ENCODE measurements at regions of chr4 and their contacts with region 1.

Region 1: DNA sequence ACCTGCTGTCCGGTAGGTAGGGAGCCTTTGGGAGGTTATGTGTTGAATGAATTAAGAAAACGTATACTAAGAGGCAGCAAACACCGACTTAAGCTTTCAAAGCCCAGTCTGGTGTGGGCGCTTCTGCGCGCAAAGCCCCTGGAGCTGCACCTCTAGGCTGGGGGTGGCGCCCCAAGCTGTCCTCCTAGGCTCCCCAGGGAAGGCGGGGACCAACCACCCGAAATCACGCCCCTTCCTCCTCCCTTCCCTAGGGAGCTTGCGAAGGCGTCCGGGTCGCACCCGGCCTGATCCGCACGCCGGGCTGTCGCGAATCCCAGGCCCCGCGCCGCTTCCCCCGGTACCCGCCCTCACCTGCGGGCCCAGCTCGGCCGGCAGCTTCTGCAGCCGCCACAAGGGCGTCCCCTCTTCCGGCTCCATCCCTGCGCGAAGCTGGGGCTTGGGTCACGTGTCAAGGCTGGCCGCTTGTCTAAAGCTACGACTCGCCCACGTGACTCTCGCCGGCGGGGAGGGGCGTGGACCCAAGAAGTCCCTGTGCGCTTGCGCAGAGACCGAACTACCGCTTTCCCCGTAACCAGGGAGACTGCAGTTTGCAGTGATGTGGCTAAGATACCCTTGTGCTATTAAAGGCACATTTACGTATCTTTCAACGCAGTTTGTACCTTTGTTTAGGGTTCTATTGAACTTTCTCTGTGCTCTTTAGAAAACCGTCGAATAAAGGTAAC is at the start of gene COMMD8:
- DNase-seq: peak; percentile 99
- total RNA-seq, gene COMMD8: 21.1 TPM

Region 2: DNA sequence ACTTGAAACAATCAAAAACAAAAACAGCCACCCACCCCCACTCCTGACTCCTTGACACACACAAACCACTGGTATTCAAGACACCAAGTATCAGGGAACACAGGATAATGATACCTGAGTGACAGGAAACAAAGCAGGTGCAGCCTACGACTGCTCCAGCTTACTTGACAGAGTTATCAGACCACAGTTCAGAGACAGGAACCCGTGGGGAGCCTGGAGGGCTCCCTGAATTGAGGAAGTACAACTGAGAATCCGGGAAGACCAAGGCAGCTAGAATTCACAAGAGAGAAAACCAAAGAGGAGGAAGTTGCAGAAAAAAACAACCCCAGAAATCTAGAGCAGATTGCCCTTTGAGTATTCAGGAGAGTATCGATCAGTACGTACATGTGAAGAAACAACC is 20.4 kb before region 1 on chr4:
- intact Hi-C with region 1: no loop called
- DNase-seq: no peak

Region 3: GRCh38 chr4:47562297-47562696 is 98.9 kb after region 1 on chr4:
- intact Hi-C with region 1: loop called (anchors 2 kb)
- DNase-seq: no peak

Region 4: GRCh38 chr4:47914220-47914925 is 451.0 kb after region 1 on chr4 and contains the start of gene NFXL1:
- intact Hi-C with region 1: loop called (anchors 10 kb)
- DNase-seq: peak; percentile 98
- total RNA-seq, gene NFXL1: 6.0 TPM